PC-9 (cell line): ENCODE measurements at regions of chr1 and their contacts with region 1.

Region 1: DNA sequence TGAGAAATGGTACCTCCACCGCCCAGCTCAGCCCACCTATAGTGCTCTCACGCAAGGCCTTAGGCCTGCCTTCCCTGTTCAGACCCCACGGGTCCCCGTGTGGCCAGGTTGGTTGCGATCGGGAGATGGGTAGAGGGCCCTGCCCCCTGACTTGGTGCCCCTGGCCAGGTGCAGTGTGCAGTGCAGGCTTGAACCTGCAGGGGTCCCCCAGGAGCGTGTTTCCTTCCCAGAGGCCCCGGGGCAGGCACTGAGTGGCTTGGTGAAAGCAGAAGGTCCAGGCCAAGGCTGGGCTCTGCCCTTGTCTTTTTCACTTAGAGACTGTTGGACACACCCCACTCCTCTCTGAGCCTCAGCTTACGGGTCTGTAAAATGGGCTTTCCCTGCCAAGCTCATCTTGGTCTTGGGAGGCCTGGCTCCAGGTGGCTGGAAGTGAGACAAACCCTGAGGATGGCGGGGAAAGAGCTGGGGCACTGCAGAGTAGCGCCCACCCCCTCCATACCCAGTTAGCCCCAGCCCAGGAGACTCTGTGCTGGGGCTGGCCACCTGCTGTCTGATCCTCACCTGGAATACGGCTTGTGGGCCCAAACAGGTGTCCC is 9.3 kb upstream of the HES5 start:
- DNase-seq: no peak
- H3K4me3 ChIP-seq: no peak overlapping the region
- H3K27ac ChIP-seq: no peak overlapping the region
- H3K4me1 ChIP-seq: peaks cover 20% of the 10 kb centered on the region
- H3K27me3 ChIP-seq: no peaks in the 10 kb centered on the region
- CTCF ChIP-seq: peak; percentile 60

Region 2: GRCh38 chr1:2419416-2419815 is 120.0 kb before region 1 on chr1:
- CTCF ChIA-PET with region 1: interaction called, 14 read pairs
- POLR2A ChIA-PET with region 1: interaction called, 10 read pairs
- intact Hi-C with region 1: no loop called
- DNase-seq: no peak
- H3K4me3 ChIP-seq: no peak overlapping the region
- H3K27ac ChIP-seq: no peak overlapping the region
- H3K4me1 ChIP-seq: peaks cover 15% of the 10 kb centered on the region
- H3K27me3 ChIP-seq: peaks cover 29% of the 10 kb centered on the region
- CTCF ChIP-seq: no peak

Region 3: DNA sequence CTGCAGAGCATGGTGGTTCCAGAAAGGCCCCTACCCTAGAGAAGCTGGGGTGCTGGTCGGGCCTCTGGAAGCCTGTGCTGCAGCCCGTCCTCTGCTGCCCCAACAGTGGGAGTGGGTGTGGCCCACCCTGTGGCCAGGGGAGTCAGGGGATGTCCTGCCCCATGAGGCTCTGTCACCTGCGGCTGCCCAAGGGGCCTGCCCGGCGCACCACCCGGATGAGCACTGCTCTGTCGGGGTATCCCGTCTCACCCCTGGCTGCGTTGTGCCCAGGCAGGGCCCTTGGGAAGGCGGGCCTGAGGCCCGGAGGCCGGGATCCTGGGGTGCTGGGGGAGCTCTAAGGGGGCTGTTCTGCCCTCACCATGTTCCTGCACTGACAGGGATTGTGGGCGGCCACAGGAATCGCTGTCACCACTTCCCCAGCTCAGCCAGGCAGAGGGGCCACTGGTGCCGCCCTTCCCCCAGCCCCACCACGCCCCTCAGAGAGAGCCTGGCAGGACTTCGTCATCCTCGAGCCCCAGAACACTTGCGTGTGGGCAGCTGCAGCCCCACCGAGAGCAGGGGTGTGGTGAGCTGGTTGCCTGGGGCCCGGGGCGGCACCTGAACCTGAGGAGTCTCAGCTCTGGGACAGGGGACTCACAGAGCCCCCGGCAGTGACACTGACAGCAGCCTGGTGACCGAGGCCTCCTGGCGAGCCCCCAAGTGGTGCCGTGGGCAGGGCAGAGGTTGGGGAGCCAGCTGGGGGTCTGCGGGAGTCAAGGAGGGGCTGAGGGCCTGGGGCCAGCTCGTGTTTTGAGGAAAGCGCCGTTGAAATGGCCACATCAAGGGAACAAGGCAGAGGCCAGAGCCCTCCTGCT is 33.2 kb before region 1 on chr1:
- CTCF ChIA-PET with region 1: no interaction called
- POLR2A ChIA-PET with region 1: no interaction called
- intact Hi-C with region 1: no loop called
- DNase-seq: no peak
- H3K4me3 ChIP-seq: no peak overlapping the region
- H3K27ac ChIP-seq: no peak overlapping the region
- H3K4me1 ChIP-seq: no peaks in the 10 kb centered on the region
- H3K27me3 ChIP-seq: no peaks in the 10 kb centered on the region
- CTCF ChIP-seq: no peak

Region 4: GRCh38 chr1:2525920-2526823 is 13.2 kb before region 1 on chr1 and contains the start of gene PANK4:
- CTCF ChIA-PET with region 1: no interaction called
- POLR2A ChIA-PET with region 1: no interaction called
- intact Hi-C with region 1: loop called (anchors 1 kb)
- DNase-seq: peak; percentile 80 to 85
- H3K4me3 ChIP-seq: peak within 1 kb of the TSS; percentile 96
- H3K27ac ChIP-seq: no peak within 1 kb of the TSS
- H3K4me1 ChIP-seq: peaks cover 18% of the 10 kb centered on the region
- H3K27me3 ChIP-seq: peaks cover 20% of the 10 kb centered on the region
- CTCF ChIP-seq: no peak; the same call in 1 of the 2 replicates
- total RNA-seq, gene PANK4: 20.5 and 33.4 TPM in 2 replicates

Region 5: DNA sequence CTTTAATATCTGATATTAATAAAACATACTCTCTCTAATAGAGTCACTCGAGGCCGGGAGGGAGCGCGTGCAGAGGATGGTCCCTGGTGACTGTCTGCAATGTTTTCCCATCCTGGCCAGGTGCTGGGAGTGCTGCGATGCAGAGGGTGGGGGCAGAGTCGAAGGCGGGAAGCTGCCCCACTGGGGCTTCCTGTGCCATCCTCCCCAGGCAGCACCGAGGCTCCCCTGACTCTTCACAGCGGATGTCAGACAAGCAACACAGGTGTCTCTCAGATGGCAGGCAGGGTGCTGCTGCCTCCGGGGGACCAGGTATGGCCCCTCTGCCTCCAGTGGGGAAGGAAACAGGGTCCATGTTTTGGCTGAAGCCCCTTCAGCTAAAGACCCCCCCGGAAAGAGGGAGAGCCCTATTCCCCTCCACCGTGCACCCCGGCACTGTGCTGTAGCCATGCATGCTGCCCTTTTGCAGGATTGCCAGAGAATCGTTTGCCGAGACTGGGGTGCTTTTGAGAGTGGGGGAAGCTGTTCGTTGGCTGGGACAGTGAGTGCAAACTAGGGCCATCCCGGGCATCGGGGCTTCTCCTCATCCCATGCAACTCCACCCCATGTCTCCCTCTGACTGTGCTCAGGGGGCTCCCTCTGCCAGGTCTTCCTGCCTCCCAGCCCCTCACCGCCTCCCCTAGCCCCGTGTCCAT is 294.2 kb after region 1 on chr1:
- CTCF ChIA-PET with region 1: no interaction called
- POLR2A ChIA-PET with region 1: no interaction called
- intact Hi-C with region 1: no loop called
- DNase-seq: no peak
- H3K4me3 ChIP-seq: no peak overlapping the region
- H3K27ac ChIP-seq: no peak overlapping the region
- H3K4me1 ChIP-seq: no peaks in the 10 kb centered on the region
- H3K27me3 ChIP-seq: peaks cover 90% of the 10 kb centered on the region
- CTCF ChIP-seq: no peak